Kidney (tissue), 22 donors: ENCODE measurements at regions of chr12 and their contacts with region 1.

Region 1: GRCh38 chr12:52327052-52327829 is 6.0 kb upstream of the KRT83 start:
- DNase-seq: peak; percentile 78 to 89 (median 82)
- H3K4me3 ChIP-seq: no peak overlapping the region
- H3K27ac ChIP-seq: no peak overlapping the region
- H3K4me1 ChIP-seq: no peaks in the 10 kb centered on the region
- H3K27me3 ChIP-seq: no peaks in the 10 kb centered on the region
- CTCF ChIP-seq: peak; percentile 90

Region 2: GRCh38 chr12:51070004-51070403 is 1257.2 kb before region 1 on chr12:
- intact Hi-C with region 1: no loop called
- DNase-seq: no peak
- H3K4me3 ChIP-seq: no peak overlapping the region
- H3K27ac ChIP-seq: no peak overlapping the region
- H3K4me1 ChIP-seq: no peaks in the 10 kb centered on the region
- H3K27me3 ChIP-seq: no peaks in the 10 kb centered on the region
- CTCF ChIP-seq: no peak

Region 3: DNA sequence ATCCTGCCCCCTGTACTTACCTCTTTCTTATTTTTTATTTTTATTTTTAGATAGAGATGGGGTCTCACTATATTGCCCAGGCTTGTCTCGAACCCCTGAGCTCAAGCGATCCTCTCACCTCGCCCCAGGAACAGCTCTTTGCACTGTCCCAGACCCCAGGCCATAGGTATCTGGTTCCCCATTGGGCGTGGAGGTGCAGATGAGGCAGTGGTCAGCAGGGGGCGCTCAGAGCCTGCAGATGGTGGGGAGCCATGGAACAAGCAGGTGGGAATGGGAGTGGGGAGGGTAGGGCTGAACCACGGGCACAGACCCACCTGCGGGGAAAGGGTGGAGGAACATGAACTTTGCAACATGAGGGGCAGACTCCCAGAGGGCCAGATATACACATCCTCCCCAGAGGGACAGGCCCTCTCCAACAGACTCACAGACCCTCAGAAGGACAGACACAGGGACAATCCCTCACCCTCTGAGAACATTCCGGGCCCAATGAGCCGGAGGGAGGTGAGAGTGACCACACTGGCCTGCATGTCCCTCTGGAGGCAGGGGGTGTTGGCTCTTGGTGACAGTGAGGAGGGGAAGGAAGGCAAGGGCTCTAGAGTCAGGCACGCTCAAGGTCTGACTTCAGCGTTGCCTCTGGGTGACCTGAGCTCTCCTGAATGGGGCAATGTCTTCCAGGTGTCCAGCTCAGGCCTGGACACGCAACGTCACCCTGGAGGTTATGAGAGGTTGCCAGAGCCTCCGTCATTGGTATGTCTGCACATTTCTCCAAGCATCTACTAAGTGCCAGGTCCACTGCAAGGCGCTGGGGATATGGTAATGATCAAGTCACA is 170.3 kb before region 1 on chr12:
- intact Hi-C with region 1: loop called (anchors 5 kb)
- DNase-seq: peak; percentile 76 to 90 (median 85)
- H3K4me3 ChIP-seq: no peak overlapping the region
- H3K27ac ChIP-seq: no peak overlapping the region
- H3K4me1 ChIP-seq: peaks cover 0 to 4% (median 0%) of the 10 kb centered on the region in 3 donors
- H3K27me3 ChIP-seq: no peaks in the 10 kb centered on the region
- CTCF ChIP-seq: peak; percentile 98

Region 4: DNA sequence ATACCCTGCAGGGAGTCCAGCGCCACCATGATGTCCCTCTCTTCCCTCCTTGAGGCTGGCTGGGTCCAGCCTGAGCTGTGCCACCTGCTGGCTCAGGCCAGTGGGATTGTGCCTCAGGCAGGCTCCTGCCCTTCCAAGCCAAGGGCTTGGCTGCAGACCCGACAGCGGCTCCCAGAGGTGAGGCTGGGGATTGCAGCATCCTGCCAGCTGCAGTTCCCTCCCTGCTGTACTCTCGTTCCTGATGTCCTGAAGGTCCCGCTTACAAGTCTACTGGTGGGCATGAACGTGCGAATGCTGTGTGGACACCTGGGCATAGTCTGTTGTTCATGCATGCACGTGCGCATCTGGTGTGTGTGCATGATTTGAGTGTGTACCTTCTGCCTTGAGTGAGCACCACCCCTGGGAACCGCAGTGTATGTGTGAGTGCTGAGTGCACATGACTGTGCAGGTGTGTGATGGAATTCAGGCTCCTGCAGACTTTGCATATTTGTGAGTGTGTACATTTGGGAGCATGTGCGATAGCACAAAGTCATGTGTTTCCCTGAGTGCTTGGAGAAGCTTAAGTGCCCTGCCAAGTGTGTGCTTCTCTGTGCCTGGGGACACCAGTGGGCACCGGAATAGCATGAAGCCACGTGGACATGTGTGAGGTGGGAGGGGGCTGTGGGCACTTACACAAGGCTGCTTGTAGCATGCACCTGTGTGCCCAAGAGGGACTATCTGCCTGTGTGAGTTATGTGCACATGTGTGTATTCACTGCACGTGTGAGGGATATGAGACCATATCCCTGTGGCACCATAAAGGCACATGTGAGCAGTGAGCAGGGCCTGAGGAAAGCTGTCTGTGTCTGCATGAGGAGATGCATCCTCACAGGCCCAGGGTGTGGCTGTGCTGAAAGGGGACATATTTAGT is 113.5 kb before region 1 on chr12:
- intact Hi-C with region 1: no loop called
- DNase-seq: peak; percentile 88 to 92 (median 89)
- H3K4me3 ChIP-seq: no peak overlapping the region
- H3K27ac ChIP-seq: no peak overlapping the region
- H3K4me1 ChIP-seq: peaks cover 0 to 25% (median 13%) of the 10 kb centered on the region in 3 donors
- H3K27me3 ChIP-seq: no peaks in the 10 kb centered on the region
- CTCF ChIP-seq: peak; percentile 97

Region 5: DNA sequence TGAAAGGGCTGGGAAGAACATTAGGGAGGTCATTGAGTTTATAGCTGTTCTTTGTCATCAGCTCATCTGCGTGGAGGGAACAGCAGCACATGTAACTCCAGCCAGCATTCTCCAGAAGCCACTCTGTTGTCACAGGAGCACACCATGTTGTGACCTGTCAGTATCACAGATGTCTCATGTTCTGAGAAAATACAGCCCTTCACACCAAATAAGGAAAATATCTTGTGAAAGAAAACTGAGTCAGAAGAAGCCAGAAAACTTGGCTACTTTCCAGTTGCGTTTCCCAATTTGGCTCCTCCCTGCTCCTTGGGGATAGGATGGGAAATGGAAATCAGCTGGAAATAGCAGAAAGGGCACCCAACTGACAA is 89.1 kb after region 1 on chr12:
- intact Hi-C with region 1: no loop called
- DNase-seq: peak in 3 of 5 donors; percentile 22 to 85 (median 77)
- H3K4me3 ChIP-seq: no peak overlapping the region
- H3K27ac ChIP-seq: peak overlapping the region in 1 of 2 donors; percentile 59
- H3K4me1 ChIP-seq: peaks cover 0 to 2% (median 0%) of the 10 kb centered on the region in 3 donors
- H3K27me3 ChIP-seq: no peaks in the 10 kb centered on the region
- CTCF ChIP-seq: no peak